ENCODE measurements at regions of chr1 and their contacts with region 1.

Region 1: DNA sequence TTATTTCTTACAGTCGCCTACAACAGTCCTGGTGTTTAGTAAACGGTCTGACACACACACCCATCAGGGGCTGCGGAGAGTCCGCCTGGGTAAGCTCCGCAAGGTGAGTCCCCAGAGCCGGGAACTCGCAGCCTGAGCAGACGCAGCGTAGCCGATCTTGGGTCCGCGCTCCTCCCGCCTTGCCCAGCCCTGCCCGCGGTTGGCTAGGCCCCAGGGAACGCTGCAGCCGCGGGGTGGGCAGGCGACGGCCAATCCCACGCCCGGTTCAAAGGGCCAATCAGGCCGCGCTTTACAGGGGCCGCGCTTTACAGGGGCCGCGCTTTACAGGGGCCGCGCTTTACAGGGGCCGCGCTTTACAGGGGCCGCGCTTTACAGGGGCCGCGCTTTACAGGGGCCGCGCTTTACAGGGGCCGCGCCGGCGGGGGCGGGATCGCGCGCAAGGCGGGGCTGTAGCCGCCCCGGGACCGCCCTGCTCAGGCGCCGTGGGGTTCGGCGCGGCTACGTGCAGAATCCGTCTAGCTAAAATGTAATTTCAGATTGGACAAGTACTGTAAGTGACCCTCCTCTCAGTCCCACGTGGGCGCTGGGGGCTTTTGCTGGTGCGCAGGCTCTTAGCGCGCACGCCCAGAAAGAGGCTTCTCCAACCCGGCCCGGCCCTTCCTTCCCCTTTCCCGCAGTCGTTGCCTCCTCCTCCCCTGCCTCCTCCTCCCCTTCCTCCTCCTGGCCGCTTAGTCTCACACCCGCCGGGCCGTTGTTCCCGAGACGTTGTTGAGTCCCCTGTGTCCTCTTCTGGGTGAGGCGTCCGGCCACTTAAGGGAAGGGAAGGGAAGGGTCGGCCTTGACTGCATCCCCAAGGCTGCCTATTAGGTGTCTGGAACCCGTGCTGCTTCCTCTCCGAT is at the start of gene FGGY:
- DNase-seq: peak; percentile 90
- H3K4me3 Mint-ChIP-seq: peak within 1 kb of the TSS; percentile 79
- H3K27ac Mint-ChIP-seq: peak within 1 kb of the TSS; percentile 70
- H3K4me1 Mint-ChIP-seq: peaks cover 13% of the 10 kb centered on the region
- H3K27me3 Mint-ChIP-seq: no peaks in the 10 kb centered on the region
- total RNA-seq, gene FGGY: 10.2 TPM

Region 2: GRCh38 chr1:59020151-59020997 is 276.2 kb before region 1 on chr1:
- CTCF ChIA-PET with region 1: no interaction called
- POLR2A ChIA-PET with region 1: no interaction called
- intact Hi-C with region 1: loop called (anchors 10 kb)
- DNase-seq: peak; percentile 67
- H3K4me3 Mint-ChIP-seq: peak overlapping the region; percentile 46
- H3K27ac Mint-ChIP-seq: peak overlapping the region; percentile 87
- H3K4me1 Mint-ChIP-seq: peaks cover 25% of the 10 kb centered on the region
- H3K27me3 Mint-ChIP-seq: no peaks in the 10 kb centered on the region

Region 3: GRCh38 chr1:59132195-59132753 is 164.3 kb before region 1 on chr1:
- CTCF ChIA-PET with region 1: no interaction called
- POLR2A ChIA-PET with region 1: no interaction called
- intact Hi-C with region 1: no loop called
- DNase-seq: no peak
- H3K4me3 Mint-ChIP-seq: no peak overlapping the region
- H3K27ac Mint-ChIP-seq: no peak overlapping the region
- H3K4me1 Mint-ChIP-seq: no peaks in the 10 kb centered on the region
- H3K27me3 Mint-ChIP-seq: peaks cover 8% of the 10 kb centered on the region

Region 4: GRCh38 chr1:59150577-59151391 is 145.8 kb before region 1 on chr1:
- CTCF ChIA-PET with region 1: no interaction called
- POLR2A ChIA-PET with region 1: no interaction called
- intact Hi-C with region 1: loop called (anchors 10 kb)
- DNase-seq: peak; percentile 37
- H3K4me3 Mint-ChIP-seq: no peak overlapping the region
- H3K27ac Mint-ChIP-seq: no peak overlapping the region
- H3K4me1 Mint-ChIP-seq: peaks cover 16% of the 10 kb centered on the region
- H3K27me3 Mint-ChIP-seq: no peaks in the 10 kb centered on the region

Region 5: DNA sequence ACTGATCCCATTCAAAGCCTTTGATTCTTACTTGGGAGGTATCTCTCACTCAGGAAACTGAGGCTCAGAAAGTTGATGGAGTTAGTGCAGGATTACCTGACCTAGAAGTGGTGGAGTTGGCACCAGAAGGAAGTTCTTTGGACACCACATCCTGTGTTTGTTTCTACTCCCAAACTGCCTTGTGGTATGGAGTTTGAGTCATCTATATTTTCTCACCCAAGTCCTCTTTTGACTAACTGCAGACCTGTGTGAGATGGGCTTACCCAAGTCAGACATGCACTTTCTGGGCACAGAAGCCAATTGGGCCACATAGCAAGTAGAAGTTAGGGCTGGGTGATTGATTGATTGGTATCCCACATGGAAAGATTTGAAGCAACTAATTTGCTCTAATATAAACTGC is 36.4 kb after region 1 on chr1:
- CTCF ChIA-PET with region 1: no interaction called
- POLR2A ChIA-PET with region 1: no interaction called
- intact Hi-C with region 1: loop called (anchors 1 kb)
- DNase-seq: peak; percentile 46
- H3K4me3 Mint-ChIP-seq: no peak overlapping the region
- H3K27ac Mint-ChIP-seq: peak overlapping the region; percentile 54
- H3K4me1 Mint-ChIP-seq: peaks cover 28% of the 10 kb centered on the region
- H3K27me3 Mint-ChIP-seq: no peaks in the 10 kb centered on the region

Region 6: GRCh38 chr1:59814180-59814900 is 517.7 kb after region 1 on chr1:
- CTCF ChIA-PET with region 1: no interaction called
- POLR2A ChIA-PET with region 1: no interaction called
- intact Hi-C with region 1: loop called (anchors 1 kb)
- DNase-seq: peak; percentile 92
- H3K4me3 Mint-ChIP-seq: peak overlapping the region; percentile 80
- H3K27ac Mint-ChIP-seq: peak overlapping the region; percentile 75
- H3K4me1 Mint-ChIP-seq: peaks cover 7% of the 10 kb centered on the region
- H3K27me3 Mint-ChIP-seq: peaks cover 5% of the 10 kb centered on the region

Measured in activated CD4-positive, alpha-beta memory T cell treated with anti-CD3 and anti-CD28 coated beads for 36 hours (primary cell).